Cardiac septum (tissue), 1 donor: ENCODE measurements at regions of chr19 and their contacts with region 1.

Region 1: GRCh38 chr19:15418588-15419412 is at the start of gene AKAP8L:
- DNase-seq: peak; percentile 98
- total RNA-seq, gene AKAP8L: 63.1 TPM

Region 2: DNA sequence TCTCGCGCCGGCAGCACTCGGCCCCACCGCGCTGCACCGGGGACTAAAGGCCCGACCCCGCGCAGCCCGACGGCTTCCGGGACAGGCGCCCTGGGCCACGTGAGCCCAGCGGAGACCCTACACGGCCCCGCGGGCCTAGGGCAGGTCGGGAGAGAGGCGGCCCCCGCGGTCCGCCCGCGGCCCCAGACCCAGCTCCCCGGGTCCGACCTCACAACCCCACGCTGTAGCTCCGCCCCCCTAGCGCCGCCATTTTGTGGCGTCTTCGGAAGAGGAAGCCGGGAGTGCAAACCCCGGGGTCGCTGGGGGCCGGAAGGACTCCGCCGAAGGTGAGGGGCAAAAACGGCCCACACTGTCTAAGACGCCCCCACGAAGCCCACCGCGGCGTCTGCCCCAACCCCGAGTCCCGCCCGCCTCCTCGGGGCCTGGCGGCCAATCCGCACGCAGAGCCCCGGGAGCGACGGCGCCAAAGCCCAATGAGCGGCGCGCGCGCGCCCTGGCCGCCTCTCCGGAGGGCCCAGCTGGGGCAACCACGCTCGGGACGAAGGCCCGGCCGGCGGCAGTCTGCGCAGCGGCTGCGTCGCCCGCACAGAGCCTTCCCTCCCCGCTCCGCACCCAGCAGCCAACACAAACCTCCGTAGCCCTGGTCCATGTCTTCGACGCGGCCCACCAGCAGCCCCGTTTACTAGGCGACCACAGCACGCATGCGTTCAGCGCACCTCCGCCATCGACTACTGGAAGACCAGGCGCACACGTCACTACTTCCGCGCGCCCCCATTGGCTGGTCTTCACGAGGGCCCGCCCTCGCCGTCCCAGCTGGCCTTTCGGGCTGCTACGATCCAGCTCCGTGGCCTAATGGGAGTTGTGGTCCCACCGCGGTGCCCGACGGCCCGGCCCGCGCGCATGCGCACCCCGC is 39.5 kb before region 1 on chr19 and contains the start of gene AKAP8:
- intact Hi-C with region 1: loop called (anchors 1 kb)
- DNase-seq: peak; percentile 99
- total RNA-seq, gene AKAP8: 19.2 TPM

Region 3: DNA sequence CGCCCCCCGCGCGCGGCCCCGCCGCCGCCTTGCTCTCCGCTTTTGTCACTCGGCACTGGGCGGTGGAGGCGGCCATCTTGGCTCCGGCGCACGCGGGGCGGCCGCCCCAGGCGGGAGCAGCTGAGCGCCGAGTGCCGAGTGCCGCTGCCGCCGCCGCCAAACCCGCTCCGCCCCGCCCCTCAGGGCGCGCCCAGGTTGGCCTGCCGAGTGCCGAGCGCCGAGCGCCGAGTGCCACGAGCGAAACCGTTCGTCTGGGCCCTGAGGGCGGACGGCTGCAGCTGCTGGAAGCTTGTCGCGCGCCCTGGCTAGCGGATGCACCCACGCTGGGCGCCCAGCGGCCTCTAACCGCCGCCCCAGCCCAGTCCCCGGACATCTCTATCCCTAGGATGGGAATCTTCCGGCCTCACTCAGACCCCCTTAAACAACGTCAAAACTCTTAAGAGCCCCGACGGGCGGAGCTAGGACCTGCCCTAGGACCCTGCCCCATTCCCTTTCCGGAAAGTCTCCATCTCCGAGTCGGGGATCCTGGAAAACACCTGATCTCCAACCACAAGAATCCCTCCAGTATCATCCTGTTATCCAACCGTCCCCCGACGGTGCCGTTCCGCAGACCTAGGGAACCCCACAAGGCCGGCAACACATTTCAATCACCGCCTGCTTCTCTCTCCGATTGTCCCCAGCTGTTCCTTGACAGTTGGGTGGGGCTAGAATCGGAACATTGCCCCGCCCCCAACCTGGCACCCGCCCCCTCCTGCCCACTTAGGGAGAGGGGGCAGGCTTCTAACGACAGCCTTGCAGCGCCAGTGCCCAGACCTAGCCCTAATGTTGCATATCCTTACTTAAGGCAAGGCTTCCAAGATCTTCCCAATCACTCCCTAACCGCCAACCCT is 14.1 kb after region 1 on chr19:
- intact Hi-C with region 1: loop called (anchors 2 kb)
- DNase-seq: peak; percentile 97

Region 4: GRCh38 chr19:15897738-15898276 is 479.0 kb after region 1 on chr19 and contains the start of gene CYP4F2:
- intact Hi-C with region 1: no loop called
- DNase-seq: no peak
- total RNA-seq, gene CYP4F2: not detected